ENCODE measurements at regions of chr10 and their contacts with region 1.

Region 1: DNA sequence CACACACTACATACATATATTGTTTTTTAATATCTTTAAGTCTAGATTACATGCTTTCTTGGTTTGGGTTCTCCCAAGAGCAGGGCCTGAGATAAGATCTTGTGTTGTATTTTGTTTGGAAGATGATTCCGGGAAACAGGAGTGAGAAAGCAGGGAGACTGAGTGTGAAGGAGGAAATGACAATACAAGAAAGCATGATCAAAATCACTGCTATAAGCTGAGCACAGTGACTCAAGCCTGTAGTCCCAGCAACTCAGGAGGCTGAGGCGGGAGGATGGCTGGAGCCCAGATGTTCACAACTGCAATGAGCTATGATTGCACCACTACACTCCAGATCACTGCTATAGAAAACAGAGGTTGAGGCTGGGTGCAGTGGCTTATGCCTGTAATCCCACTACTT is 267.6 kb downstream of the SKIDA1 start:
- DNase-seq: peak; percentile 55
- H3K4me3 ChIP-seq: no peak overlapping the region
- H3K27ac ChIP-seq: no peak overlapping the region
- H3K4me1 ChIP-seq: no peaks in the 10 kb centered on the region
- H3K27me3 ChIP-seq: no peaks in the 10 kb centered on the region
- CTCF ChIP-seq: no peak
- POLR2A ChIP-seq: no peak

Region 2: GRCh38 chr10:21173812-21174714 is 83.9 kb before region 1 on chr10:
- CTCF ChIA-PET with region 1: interaction called, 6 read pairs
- POLR2A ChIA-PET with region 1: no interaction called
- dilution Hi-C with region 1: no loop called
- intact Hi-C with region 1: loop called (anchors 5 kb)
- DNase-seq: no peak
- H3K4me3 ChIP-seq: peak overlapping the region; percentile 5 to 29 (median 19)
- H3K27ac ChIP-seq: no peak overlapping the region
- H3K4me1 ChIP-seq: peaks cover 6% of the 10 kb centered on the region
- H3K27me3 ChIP-seq: peaks cover 20 to 48% of the 10 kb centered on the region in 2 experiments
- CTCF ChIP-seq: no peak
- POLR2A ChIP-seq: no peak

Measured in endothelial cell of umbilical vein (primary cell).